ENCODE measurements at regions of chr10 and their contacts with region 1.

Region 1: DNA sequence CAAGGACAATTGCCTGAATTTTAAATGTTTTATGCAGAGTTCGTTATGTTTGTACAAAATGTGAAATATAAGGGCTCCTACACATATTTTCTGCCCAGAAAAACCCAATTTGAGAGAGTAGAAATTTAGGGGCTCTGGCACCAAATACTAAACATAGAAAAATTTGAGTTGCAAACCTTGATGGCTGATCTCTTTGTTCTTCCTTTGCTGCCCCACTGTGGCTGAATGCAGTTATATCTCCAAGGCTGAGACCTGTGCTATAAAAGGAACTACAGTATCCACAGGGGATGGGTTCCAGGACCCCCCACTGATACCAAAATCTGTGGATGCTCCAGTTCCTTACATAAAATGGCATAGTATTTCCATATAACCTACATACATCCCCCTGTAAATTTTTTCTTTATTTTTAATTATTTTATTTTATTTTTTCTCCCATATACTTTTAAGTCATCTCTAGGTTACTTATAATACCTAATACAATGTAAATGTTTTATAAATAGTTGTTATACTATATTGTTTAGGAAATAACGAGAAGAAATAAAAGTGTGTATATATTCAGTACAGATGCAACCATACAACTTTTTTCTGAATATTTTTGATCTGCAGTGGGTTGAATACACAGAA is 22.5 kb downstream of the CFAP43 start:
- DNase-seq: no peak
- H3K4me3 ChIP-seq: no peak overlapping the region
- H3K27ac ChIP-seq: no peak overlapping the region
- H3K4me1 ChIP-seq: no peaks in the 10 kb centered on the region
- H3K27me3 ChIP-seq: no peaks in the 10 kb centered on the region
- CTCF ChIP-seq: peak in 3 of 4 experiments; percentile 24 to 57 (median 36)
- POLR2A ChIP-seq: no peak

Region 2: DNA sequence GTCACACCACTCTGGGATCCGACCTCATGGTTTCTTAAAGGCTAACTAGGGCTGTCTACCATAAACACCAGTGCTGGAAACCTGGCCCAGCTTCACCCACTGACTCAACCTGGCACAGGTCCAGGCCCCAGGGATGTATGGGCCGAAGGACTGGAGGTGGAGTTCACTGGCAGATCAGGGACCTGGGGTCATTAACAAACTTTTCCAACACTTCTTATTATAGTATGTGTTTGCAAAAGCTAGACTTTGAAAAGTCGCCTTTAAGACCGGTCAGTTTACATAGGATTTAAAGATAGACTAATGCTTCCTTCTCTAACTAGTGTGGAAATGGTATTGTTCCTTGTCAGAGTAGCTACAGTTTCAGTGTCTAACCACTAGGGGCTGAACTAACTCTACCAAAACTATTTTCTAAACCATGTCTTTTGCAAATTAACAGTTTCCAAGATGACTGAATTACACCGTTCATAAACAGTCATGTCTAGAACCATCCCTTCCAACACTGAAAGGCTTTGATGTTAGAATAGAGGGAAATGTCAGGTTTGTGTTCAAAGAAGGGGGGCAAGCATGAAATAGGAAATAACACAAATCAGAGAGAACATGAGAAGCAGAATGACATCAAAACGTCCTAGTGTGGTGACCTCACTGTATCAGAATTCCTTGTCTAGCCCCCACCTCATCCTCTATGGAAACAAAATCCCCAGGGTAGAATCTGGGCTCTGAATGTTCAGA is 321.4 kb before region 1 on chr10:
- intact Hi-C with region 1: loop called (anchors 5 kb)
- DNase-seq: peak; percentile 42
- H3K4me3 ChIP-seq: no peak overlapping the region
- H3K27ac ChIP-seq: no peak overlapping the region
- H3K4me1 ChIP-seq: no peaks in the 10 kb centered on the region
- H3K27me3 ChIP-seq: no peaks in the 10 kb centered on the region
- CTCF ChIP-seq: peak in 3 of 4 experiments; percentile 88 to 98 (median 92)
- POLR2A ChIP-seq: no peak

Region 3: DNA sequence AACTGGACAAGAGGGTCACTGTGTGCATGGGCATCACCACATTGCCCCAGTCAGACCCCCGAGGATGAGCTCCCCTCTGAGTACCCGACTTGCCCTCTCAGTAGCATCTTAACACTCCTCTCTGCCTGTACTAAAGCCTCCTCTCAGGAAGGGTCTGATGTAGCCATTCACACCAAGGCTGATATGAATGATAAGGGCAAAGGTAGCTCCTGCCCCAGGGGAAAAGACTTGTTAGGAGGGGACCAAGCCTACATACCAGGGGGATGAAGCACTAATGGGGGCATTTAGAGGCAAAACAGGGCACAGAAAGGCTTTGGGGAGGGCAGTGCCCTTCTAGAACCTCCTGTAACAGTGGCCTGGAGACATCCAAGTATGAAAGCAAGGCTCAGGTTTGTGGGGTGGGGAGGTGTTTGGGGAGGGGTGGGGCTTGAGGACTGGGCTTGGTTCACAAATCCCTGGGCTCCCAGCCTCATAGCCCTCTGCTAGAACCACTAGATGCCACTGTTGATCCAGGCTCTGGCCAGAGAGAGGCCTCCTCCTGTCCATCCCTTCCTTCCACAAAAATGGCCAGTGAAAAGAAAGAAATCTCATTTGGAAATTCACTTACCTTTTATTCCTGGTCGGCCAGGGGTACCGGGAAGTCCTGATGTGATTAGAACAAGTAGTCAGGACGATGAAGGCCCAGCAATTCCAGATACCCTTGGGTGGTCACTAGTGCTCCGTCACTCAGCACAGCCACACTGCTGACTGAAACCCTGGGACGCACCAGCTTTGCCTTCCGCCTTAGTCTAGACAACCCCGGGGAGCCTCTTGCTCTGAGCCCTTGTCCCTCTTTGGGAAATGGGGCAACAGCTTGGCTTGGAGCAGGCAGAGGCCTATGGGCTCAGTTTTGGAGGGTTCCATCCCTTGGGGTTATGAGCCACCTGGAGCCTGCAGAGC is 164.3 kb before region 1 on chr10:
- intact Hi-C with region 1: loop called (anchors 2 kb)
- DNase-seq: no peak
- H3K4me3 ChIP-seq: no peak overlapping the region
- H3K27ac ChIP-seq: no peak overlapping the region
- H3K4me1 ChIP-seq: no peaks in the 10 kb centered on the region
- H3K27me3 ChIP-seq: no peaks in the 10 kb centered on the region
- CTCF ChIP-seq: peak in 3 of 4 experiments; percentile 15 to 42 (median 35)
- POLR2A ChIP-seq: no peak

Region 4: GRCh38 chr10:104090611-104091010 is 119.1 kb before region 1 on chr10:
- intact Hi-C with region 1: no loop called
- DNase-seq: no peak
- H3K4me3 ChIP-seq: no peak overlapping the region
- H3K27ac ChIP-seq: no peak overlapping the region
- H3K4me1 ChIP-seq: no peaks in the 10 kb centered on the region
- H3K27me3 ChIP-seq: no peaks in the 10 kb centered on the region
- CTCF ChIP-seq: no peak
- POLR2A ChIP-seq: no peak